Caco-2 (cell line): ENCODE measurements at regions of chr7 and their contacts with region 1.

Region 1: DNA sequence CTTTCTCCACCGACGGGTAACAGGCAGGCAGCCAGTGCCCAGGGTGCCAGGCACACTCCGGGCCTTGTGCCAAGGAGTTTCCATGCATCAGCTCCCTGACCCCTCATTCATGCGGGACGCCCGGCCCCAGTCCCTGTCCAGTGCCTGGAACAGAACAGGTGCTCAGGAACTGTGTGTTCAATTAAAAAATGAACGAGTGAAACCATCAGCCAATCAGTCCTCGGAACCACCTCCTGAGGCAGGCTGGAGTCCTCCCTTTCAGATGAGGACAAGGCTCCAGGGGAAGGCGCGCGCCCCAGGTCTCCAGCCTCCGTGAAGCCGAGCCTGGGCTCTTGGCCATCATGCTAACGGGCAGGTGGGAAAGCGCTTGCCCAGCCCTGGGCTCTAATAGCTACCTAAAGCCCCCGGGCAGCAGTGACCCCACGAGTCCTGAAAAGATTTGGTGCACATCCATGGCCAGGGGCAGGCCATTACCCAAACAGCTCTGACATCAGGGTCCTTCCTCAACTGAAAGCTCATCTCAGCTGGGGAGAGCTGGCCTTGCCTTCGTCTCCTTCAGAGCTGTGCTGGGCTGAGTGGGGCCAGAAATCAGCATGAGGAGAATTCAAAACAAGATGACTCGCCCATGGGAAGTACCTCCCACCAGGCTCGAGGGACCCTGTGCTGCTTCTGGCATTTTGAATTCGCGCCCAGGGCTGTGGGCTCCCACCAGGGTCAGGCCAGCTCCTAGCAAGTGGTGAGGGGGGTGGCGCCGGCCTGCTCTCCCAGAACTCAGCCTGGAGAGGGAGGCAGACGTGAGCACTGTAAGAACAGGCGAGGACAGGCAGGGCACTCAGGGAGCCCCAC is 200.5 kb downstream of the MAD1L1 start:
- DNase-seq: peak in 1 of 2 experiments; percentile 14
- H3K4me3 ChIP-seq: no peak overlapping the region
- H3K4me3 Mint-ChIP-seq: no peak overlapping the region
- H3K27ac Mint-ChIP-seq: no peak overlapping the region
- H3K4me1 ChIP-seq: peaks cover 9% of the 10 kb centered on the region; the same call in 1 of the 2 replicates
- H3K4me1 Mint-ChIP-seq: peaks cover 15% of the 10 kb centered on the region
- H3K27me3 ChIP-seq: no peaks in the 10 kb centered on the region
- H3K27me3 Mint-ChIP-seq: no peaks in the 10 kb centered on the region
- CTCF ChIP-seq: no peak

Region 2: GRCh38 chr7:2266908-2267307 is 234.7 kb after region 1 on chr7:
- CTCF ChIA-PET with region 1: no interaction called
- POLR2A ChIA-PET with region 1: no interaction called
- intact Hi-C with region 1: no loop called
- DNase-seq: no peak
- H3K4me3 ChIP-seq: no peak overlapping the region
- H3K4me3 Mint-ChIP-seq: no peak overlapping the region
- H3K27ac Mint-ChIP-seq: no peak overlapping the region
- H3K4me1 ChIP-seq: peaks cover 6% of the 10 kb centered on the region
- H3K4me1 Mint-ChIP-seq: peaks cover 5% of the 10 kb centered on the region
- H3K27me3 ChIP-seq: no peaks in the 10 kb centered on the region
- H3K27me3 Mint-ChIP-seq: no peaks in the 10 kb centered on the region
- CTCF ChIP-seq: no peak

Region 3: GRCh38 chr7:2281541-2281940 is 249.3 kb after region 1 on chr7:
- CTCF ChIA-PET with region 1: interaction called, 5 read pairs
- POLR2A ChIA-PET with region 1: interaction called, 10 read pairs
- intact Hi-C with region 1: no loop called
- DNase-seq: no peak
- H3K4me3 ChIP-seq: no peak overlapping the region
- H3K4me3 Mint-ChIP-seq: no peak overlapping the region
- H3K27ac Mint-ChIP-seq: peak overlapping the region; percentile 67
- H3K4me1 ChIP-seq: peaks cover 45% of the 10 kb centered on the region
- H3K4me1 Mint-ChIP-seq: peaks cover 26% of the 10 kb centered on the region
- H3K27me3 ChIP-seq: no peaks in the 10 kb centered on the region
- H3K27me3 Mint-ChIP-seq: no peaks in the 10 kb centered on the region
- CTCF ChIP-seq: no peak